ENCODE measurements at regions of chr4 and their contacts with region 1.

Region 1: GRCh38 chr4:145762719-145763118 is 82.8 kb downstream of the C4orf51 start:
- DNase-seq: no peak
- H3K4me3 ChIP-seq: no peak overlapping the region
- H3K27ac ChIP-seq: no peak overlapping the region
- H3K27me3 ChIP-seq: no peaks in the 10 kb centered on the region
- CTCF ChIP-seq: no peak

Region 2: DNA sequence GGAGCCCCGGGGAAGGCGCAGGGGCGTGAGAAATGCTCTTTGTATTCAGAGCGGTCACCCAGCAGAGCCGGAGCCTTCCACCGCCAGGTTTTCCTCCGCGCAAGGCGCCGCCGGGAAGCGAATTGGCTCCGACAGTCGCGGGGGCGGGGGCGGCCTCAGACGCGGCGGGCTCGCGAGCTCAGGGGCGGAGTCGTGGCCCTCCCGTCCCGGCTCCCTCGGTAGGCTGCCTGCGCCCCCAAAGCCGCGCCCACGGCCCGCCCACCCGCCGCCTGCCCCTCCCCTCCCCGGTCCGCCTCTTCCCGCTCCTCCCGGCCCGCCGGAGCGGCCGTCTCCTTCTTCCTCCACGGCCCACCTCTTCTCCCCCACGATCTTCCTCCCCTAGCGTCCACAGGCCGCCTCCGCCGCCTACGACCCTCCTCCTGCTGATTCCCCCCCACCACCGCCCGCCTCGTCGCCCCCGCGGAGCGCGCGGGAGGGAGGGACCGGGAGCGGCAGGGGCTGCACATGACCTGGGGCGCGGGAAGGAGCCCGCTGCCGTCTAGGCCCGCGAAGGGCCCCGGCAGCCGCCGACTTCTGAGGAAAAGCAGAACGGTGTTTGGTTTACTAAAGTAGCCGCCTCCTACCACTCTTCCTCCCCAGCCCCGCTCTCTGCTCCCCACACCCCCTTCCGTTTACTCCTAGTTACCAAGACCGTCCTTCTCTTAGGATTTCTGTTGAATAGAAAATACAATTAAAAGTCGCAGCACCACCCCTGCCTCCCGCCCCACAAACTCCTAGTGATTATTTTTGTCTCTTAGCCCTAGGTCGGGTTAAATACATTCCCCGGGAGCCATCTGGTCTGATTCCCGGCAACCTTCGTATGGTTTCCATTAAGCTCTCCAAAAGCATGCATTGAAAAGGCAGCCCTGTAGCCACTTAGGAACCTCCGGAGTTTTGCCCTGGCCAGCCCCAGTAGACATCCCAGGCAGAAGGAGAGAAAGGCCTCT is 29.5 kb before region 1 on chr4:
- CTCF ChIA-PET with region 1: no interaction called
- POLR2A ChIA-PET with region 1: no interaction called
- DNase-seq: peak; percentile 66
- H3K4me3 ChIP-seq: peak overlapping the region; percentile 62
- H3K27ac ChIP-seq: peak overlapping the region; percentile 100
- H3K27me3 ChIP-seq: no peaks in the 10 kb centered on the region
- CTCF ChIP-seq: no peak

Region 3: GRCh38 chr4:145887241-145887991 is 124.7 kb after region 1 on chr4:
- CTCF ChIA-PET with region 1: no interaction called
- POLR2A ChIA-PET with region 1: no interaction called
- DNase-seq: peak; percentile 49
- H3K4me3 ChIP-seq: no peak overlapping the region
- H3K27ac ChIP-seq: peak overlapping the region; percentile 81
- H3K27me3 ChIP-seq: no peaks in the 10 kb centered on the region
- CTCF ChIP-seq: 0 out of 2 replicates have a peak, but pooled peaks have one; percentile 3

Region 4: GRCh38 chr4:146191766-146192458 is 429.2 kb after region 1 on chr4:
- CTCF ChIA-PET with region 1: no interaction called
- POLR2A ChIA-PET with region 1: interaction called, 10 read pairs
- DNase-seq: no peak
- H3K4me3 ChIP-seq: no peak overlapping the region
- H3K27ac ChIP-seq: no peak overlapping the region
- H3K27me3 ChIP-seq: no peaks in the 10 kb centered on the region
- CTCF ChIP-seq: no peak

Measured in AG04450 (cell line).